ENCODE measurements at regions of chr3 and their contacts with region 1.

Region 1: GRCh38 chr3:73056014-73056844 is 5.2 kb upstream of the EBLN2 start:
- DNase-seq: no peak
- ATAC-seq: peak; percentile 71

Region 2: GRCh38 chr3:72938471-72939265 is 117.6 kb before region 1 on chr3:
- intact Hi-C with region 1: loop called (anchors 10 kb)
- DNase-seq: peak; percentile 66
- ATAC-seq: peak; percentile 98

Region 3: GRCh38 chr3:72999951-73000350 is 56.3 kb before region 1 on chr3:
- intact Hi-C with region 1: loop called (anchors 5 kb)
- DNase-seq: no peak
- ATAC-seq: no peak

Region 4: GRCh38 chr3:73029321-73029796 is 26.9 kb before region 1 on chr3:
- intact Hi-C with region 1: no loop called
- DNase-seq: no peak
- ATAC-seq: peak; percentile 73